ENCODE measurements at regions of chr12 and their contacts with region 1.

Region 1: DNA sequence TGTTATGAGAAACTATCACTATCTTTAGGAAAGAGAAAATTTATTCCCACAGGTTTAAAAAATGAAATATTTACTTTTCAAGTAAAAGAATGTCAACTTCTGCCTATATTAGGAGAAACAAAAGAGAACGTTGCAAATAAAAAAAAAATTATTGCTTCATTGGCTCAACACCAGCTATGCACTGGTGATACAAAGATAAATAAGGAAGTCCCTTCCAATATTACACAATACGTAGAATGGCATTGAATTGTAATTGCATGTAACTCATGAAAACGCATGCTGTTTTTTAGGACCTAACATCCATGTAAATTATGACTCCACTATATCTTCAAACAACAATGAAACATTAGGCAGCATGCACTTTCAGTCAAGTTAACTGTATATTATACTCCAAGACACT is 56.4 kb upstream of the RERGL start:
- DNase-seq: peak; percentile 62
- H3K4me3 Mint-ChIP-seq: peak overlapping the region; percentile 29
- H3K27ac Mint-ChIP-seq: peak overlapping the region; percentile 85
- H3K4me1 Mint-ChIP-seq: peaks cover 19% of the 10 kb centered on the region
- H3K27me3 Mint-ChIP-seq: no peaks in the 10 kb centered on the region
- CTCF ChIP-seq: no peak

Region 2: DNA sequence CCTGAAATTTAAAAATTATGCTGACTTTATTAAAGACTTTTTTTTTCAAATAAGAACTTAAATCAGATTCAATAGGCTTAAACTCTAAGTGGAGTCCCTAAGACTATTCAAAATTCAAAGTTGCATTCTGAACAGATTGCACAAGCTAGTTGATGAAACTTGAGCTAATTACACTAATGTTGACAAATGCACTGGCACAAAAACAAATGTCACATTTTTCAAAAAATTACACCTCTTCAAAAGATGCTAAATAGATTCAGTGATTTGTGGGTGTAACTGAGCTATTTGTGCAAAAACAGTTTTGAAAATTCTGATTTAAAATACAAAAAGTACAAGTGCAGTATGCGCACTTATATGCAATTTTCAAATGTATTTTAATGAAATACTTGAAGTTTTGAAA is 261.8 kb before region 1 on chr12:
- CTCF ChIA-PET with region 1: no interaction called
- POLR2A ChIA-PET with region 1: no interaction called
- intact Hi-C with region 1: no loop called
- DNase-seq: no peak
- H3K4me3 Mint-ChIP-seq: no peak overlapping the region
- H3K27ac Mint-ChIP-seq: no peak overlapping the region
- H3K4me1 Mint-ChIP-seq: no peaks in the 10 kb centered on the region
- H3K27me3 Mint-ChIP-seq: peaks cover 76% of the 10 kb centered on the region
- CTCF ChIP-seq: no peak

Region 3: DNA sequence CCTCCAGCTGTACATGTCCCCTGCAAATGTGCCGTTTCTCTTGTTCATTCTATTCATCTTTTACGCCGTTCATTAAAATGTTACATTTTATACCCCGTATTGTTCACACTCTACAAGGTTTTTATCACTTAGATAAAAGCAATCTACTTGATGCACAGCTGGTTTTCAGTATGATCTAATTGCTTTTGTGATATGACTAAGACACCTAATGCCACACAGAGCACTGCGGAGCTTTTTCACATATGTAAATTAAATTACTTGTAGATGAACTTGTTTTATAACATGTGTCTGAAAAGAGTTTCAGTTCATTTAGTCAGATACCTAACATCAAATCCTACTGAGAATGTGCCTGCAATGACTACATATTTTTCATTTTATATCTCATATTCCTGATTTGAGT is 15.5 kb before region 1 on chr12:
- CTCF ChIA-PET with region 1: no interaction called
- POLR2A ChIA-PET with region 1: no interaction called
- intact Hi-C with region 1: no loop called
- DNase-seq: no peak
- H3K4me3 Mint-ChIP-seq: no peak overlapping the region
- H3K27ac Mint-ChIP-seq: no peak overlapping the region
- H3K4me1 Mint-ChIP-seq: peaks cover 26% of the 10 kb centered on the region
- H3K27me3 Mint-ChIP-seq: no peaks in the 10 kb centered on the region
- CTCF ChIP-seq: no peak

Region 4: DNA sequence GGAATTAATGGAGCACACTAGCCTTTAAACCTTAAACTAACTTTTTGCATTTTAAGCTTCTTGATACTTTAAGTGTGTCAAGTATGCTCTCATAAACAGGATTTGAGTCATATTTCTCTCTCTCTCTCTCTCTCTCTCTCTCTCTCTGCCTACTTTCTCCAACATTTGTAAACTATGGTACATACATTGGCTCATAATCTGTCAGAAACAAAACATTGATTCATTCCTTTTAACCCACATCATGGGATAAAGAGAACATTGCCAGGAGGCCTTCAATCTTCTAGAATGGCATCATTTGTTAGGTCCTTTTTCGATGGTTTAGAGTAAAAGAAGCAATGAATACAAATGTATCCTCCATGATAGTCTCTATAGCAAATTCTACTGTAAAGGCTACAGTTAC is 25.2 kb after region 1 on chr12:
- CTCF ChIA-PET with region 1: interaction called, 3 read pairs
- POLR2A ChIA-PET with region 1: interaction called, 7 read pairs
- intact Hi-C with region 1: loop called (anchors 2 kb)
- DNase-seq: peak; percentile 59
- H3K4me3 Mint-ChIP-seq: no peak overlapping the region
- H3K27ac Mint-ChIP-seq: no peak overlapping the region
- H3K4me1 Mint-ChIP-seq: peaks cover 20% of the 10 kb centered on the region
- H3K27me3 Mint-ChIP-seq: no peaks in the 10 kb centered on the region
- CTCF ChIP-seq: no peak